ENCODE measurements at regions of chr3 and their contacts with region 1.

Region 1: DNA sequence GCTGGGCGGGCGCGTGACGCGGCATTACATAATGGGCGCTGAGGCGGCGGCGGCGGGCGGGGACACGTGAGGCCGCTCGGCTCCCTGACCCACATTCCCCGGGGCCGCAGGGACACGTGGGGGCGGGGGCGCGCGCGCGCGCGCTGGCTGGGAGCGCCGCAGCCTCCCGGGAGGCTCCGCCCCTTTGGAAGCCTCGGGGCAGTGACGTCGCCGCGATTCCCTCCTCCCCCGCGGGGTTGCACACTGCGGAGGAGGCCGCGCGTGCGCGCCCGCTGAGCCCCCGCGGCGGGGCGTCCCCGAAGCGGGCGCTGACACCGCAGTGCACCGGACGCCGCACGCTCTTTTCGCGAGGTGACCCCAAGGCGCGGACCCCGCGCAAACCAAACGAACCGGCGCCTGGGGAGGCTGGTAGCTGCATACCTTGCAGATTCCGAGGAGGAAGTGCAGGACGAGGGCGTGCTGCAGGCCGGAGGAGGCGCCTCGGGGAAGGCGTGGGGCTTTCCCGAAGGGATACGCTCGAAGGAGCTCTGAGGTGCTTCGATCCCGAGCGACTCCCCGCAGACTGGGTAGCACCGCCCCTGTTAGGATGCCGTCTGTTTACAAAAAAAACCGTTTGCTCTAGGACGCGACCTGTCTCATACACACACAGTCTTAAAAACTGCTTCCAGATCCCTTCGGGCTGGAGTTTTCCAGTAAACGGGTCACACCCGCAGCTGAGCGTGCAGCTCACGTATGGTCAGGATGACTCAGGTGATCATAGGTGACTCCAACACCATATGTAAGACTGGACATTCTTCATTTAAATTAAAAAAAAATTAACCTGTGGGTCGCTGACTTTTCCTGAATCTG is 1.0 kb downstream of the NR1D2 start:
- DNase-seq: peak; percentile 92 to 99 (median 97)
- ATAC-seq: peak; percentile 80 to 84 (median 83)
- H3K4me3 ChIP-seq: peak overlapping the region; percentile 71 to 74
- H3K4me3 Mint-ChIP-seq: peak overlapping the region; percentile 80 to 81 (median 81)
- H3K27ac ChIP-seq: peak overlapping the region; percentile 93
- H3K27ac Mint-ChIP-seq: peak overlapping the region; percentile 71 to 87
- H3K4me1 ChIP-seq: peaks cover 16 to 37% of the 10 kb centered on the region in 2 experiments
- H3K4me1 Mint-ChIP-seq: peaks cover 45 to 55% (median 51%) of the 10 kb centered on the region in 3 donors
- H3K27me3 ChIP-seq: no peaks in the 10 kb centered on the region
- H3K27me3 Mint-ChIP-seq: no peaks in the 10 kb centered on the region

Region 2: GRCh38 chr3:23785097-23785645 is 161.0 kb before region 1 on chr3:
- CTCF ChIA-PET with region 1: no interaction called
- POLR2A ChIA-PET with region 1: no interaction called
- DNase-seq: no peak
- ATAC-seq: no peak
- H3K4me3 ChIP-seq: no peak overlapping the region
- H3K4me3 Mint-ChIP-seq: no peak overlapping the region
- H3K27ac ChIP-seq: no peak overlapping the region
- H3K27ac Mint-ChIP-seq: no peak overlapping the region
- H3K4me1 ChIP-seq: no peaks in the 10 kb centered on the region
- H3K4me1 Mint-ChIP-seq: no peaks in the 10 kb centered on the region
- H3K27me3 ChIP-seq: peaks cover 0 to 2% of the 10 kb centered on the region in 2 experiments
- H3K27me3 Mint-ChIP-seq: peaks cover 13 to 16% of the 10 kb centered on the region in 2 donors

Region 3: GRCh38 chr3:23916886-23917678 is 29.0 kb before region 1 on chr3 and contains the starts of genes NKIRAS1 and RPL15:
- CTCF ChIA-PET with region 1: interaction called, 4 to 8 read pairs
- POLR2A ChIA-PET with region 1: interaction called, 6 to 15 read pairs
- DNase-seq: peak; percentile 91 to 99 (median 97)
- ATAC-seq: peak; percentile 94 to 96 (median 95)
- H3K4me3 ChIP-seq: peak within 1 kb of the TSS; percentile 89 to 91
- H3K4me3 Mint-ChIP-seq: peak within 1 kb of the TSS; percentile 98 to 100 (median 99)
- H3K27ac ChIP-seq: peak within 1 kb of the TSS; percentile 89
- H3K27ac Mint-ChIP-seq: peak within 1 kb of the TSS; percentile 97 to 98
- H3K4me1 ChIP-seq: peaks cover 22 to 27% of the 10 kb centered on the region in 2 experiments
- H3K4me1 Mint-ChIP-seq: peaks cover 45 to 60% (median 48%) of the 10 kb centered on the region in 3 donors
- H3K27me3 ChIP-seq: no peaks in the 10 kb centered on the region
- H3K27me3 Mint-ChIP-seq: no peaks in the 10 kb centered on the region
- total RNA-seq, gene NKIRAS1: 2.2 to 4.1 (median 3.6) TPM
- total RNA-seq, gene RPL15: 1,997 to 2,171 (median 2,116) TPM

Region 4: DNA sequence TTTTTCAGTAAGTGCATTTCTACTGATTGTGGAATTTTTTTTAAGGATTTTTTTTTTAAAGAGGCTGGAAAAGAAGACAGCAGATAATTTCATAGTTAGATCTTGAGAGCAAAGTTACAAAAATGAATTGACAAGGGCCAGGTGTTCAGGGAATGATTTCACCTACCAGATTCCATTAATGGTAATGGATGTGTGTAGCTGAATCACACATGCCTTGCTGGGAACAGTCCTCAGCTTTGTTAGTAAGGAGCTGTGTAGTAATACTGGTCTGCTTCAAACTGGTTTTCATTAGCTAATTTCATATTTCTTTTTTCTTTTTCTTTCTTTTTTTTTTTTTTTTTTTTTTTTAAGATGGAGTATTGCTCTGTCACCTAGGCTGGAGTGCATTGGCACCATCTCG is 14.9 kb after region 1 on chr3:
- CTCF ChIA-PET with region 1: interaction called, 4 to 5 read pairs
- POLR2A ChIA-PET with region 1: interaction called in 1 of 2 experiments, 10 read pairs
- DNase-seq: no peak
- ATAC-seq: no peak
- H3K4me3 ChIP-seq: no peak overlapping the region
- H3K4me3 Mint-ChIP-seq: no peak overlapping the region
- H3K27ac ChIP-seq: no peak overlapping the region
- H3K27ac Mint-ChIP-seq: no peak overlapping the region
- H3K4me1 ChIP-seq: no peaks in the 10 kb centered on the region
- H3K4me1 Mint-ChIP-seq: peaks cover 42 to 60% (median 42%) of the 10 kb centered on the region in 3 donors
- H3K27me3 ChIP-seq: no peaks in the 10 kb centered on the region
- H3K27me3 Mint-ChIP-seq: no peaks in the 10 kb centered on the region

Region 5: DNA sequence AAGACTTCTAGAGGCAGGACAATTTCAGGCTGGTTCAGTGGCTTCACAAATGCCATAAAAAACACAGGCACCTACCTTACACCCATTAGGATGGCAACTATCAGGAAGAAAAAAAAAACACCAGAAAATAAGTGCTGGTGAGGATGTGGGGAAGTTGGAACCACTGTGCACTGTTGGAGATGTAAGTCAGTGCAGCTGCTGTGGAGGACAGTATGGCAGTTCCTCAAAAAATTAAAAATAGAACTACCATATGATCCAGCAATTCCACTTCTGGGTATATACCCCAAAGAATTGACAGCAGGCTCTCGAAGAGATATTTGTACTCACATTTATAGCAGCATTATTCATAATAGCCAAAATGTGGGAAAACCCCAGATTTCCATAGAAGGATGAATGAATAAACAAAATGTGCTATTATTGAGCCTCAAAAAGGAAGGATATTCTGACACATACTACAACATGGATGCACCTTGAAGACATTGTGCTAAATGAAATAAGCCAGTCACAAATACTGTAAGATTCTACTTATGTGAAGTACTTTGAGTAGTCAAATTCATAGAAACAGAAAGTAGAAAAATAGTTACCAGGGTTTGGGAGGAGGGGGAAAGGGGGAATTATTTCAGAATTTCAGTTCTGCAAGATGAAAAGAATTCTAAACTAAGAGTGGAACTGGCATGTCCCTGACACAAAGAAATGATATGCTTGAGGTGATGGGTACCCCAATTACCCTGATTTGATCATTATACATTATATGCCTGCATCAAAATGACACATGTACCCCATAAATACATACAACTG is 39.8 kb after region 1 on chr3:
- CTCF ChIA-PET with region 1: no interaction called
- POLR2A ChIA-PET with region 1: no interaction called
- DNase-seq: no peak
- ATAC-seq: no peak
- H3K4me3 ChIP-seq: no peak overlapping the region
- H3K4me3 Mint-ChIP-seq: no peak overlapping the region
- H3K27ac ChIP-seq: no peak overlapping the region
- H3K27ac Mint-ChIP-seq: no peak overlapping the region
- H3K4me1 ChIP-seq: no peaks in the 10 kb centered on the region
- H3K4me1 Mint-ChIP-seq: peaks cover 0 to 9% (median 0%) of the 10 kb centered on the region in 3 donors
- H3K27me3 ChIP-seq: no peaks in the 10 kb centered on the region
- H3K27me3 Mint-ChIP-seq: no peaks in the 10 kb centered on the region